ENCODE measurements at regions of chr7 and their contacts with region 1.

Region 1: DNA sequence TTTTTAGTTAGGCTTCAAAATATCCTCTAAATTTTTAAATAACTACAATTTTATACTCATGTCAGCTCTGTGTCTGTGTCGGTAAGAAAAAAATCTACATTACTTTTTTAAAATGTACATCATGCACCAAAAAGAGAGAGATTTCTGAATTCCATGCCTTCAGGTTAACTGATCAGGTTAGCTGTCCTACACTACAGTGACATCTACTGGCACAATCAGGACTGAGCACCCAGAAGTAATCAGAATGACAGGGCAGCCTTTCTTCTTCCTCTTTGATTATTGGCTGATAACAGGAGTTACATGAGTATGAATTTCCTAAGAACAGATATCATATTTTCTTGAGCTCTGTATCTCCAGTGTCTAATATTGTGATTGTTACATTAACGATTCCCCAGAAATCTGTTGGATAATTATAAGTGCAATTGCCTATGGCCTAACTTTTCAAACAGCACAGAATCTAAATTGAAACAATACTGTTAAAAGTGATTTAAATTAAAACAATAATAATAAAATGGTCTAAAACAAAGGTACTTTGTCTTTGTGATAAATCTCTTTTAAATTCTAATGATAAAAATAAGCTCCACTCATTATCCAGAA is 41.8 kb upstream of the HYCC1 start:
- DNase-seq: peak; percentile 47
- H3K4me3 ChIP-seq: no peak overlapping the region
- H3K27ac ChIP-seq: no peak overlapping the region
- H3K4me1 ChIP-seq: no peaks in the 10 kb centered on the region
- H3K27me3 ChIP-seq: peaks cover 15% of the 10 kb centered on the region
- CTCF ChIP-seq: peak; percentile 71 to 88 (median 76)
- EP300 ChIP-seq: no peak
- POLR2A ChIP-seq: no peak

Region 2: GRCh38 chr7:22051886-22052673 is 1003.6 kb before region 1 on chr7:
- in situ Hi-C with region 1: no loop called
- intact Hi-C with region 1: no loop called
- DNase-seq: no peak
- H3K4me3 ChIP-seq: no peak overlapping the region
- H3K27ac ChIP-seq: no peak overlapping the region
- H3K4me1 ChIP-seq: no peaks in the 10 kb centered on the region
- H3K27me3 ChIP-seq: no peaks in the 10 kb centered on the region
- CTCF ChIP-seq: no peak
- EP300 ChIP-seq: no peak
- POLR2A ChIP-seq: no peak

Region 3: GRCh38 chr7:22559829-22560489 is 495.7 kb before region 1 on chr7:
- in situ Hi-C with region 1: loop called (anchors 5 to 25 kb)
- intact Hi-C with region 1: loop called (anchors 5 kb)
- DNase-seq: peak; percentile 65
- H3K4me3 ChIP-seq: no peak overlapping the region
- H3K27ac ChIP-seq: no peak overlapping the region
- H3K4me1 ChIP-seq: peaks cover 6 to 25% (median 7%) of the 10 kb centered on the region in 4 donors
- H3K27me3 ChIP-seq: peaks cover 13% of the 10 kb centered on the region
- CTCF ChIP-seq: peak; percentile 70 to 88 (median 83)
- EP300 ChIP-seq: no peak
- POLR2A ChIP-seq: no peak

Region 4: DNA sequence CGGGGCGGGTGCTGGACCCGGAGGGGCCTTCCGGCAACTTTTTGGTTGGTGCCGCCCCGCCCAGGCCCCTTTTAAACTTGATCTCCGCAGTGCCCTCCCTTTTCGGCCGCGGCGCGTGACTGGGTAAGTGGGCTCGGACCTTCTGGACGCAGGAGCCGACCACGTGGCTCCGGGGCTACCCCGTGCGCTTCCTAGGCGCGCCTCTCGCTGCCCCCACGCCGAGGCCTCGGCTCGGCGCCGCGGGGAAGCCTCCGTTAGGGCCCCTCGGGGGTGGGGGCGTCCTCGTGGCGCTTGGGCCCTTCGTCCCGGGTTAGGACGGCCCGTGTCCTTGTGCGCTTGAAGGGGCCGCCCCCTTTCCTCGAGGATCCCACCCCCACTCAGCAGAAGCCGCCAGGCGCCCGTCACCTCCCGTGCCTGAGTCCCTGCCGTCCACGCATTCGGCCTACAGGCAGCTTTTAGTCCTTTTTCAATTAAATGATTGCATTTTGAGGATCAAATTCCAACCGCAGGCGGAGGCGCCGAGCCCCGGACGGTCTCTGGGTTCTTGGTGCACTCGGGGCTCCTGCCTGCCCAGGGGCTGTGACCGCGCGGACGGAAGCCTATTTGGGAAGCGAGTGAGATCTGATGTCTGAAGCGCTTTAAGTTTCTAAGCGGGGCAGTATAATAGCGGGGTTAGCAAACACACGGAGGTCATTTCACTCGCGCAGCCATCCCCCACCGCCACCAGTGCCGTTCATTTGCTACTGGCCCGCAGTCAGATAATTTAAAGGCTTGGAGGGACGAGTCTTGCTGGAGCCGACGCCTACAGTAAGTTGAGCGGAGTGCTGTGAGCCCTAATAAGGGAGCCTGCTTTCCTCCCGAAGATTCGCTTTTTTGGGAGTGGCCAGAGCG is 201.3 kb before region 1 on chr7:
- in situ Hi-C with region 1: loop called in 1 of 4 experiments (anchors 10 kb)
- intact Hi-C with region 1: no loop called
- DNase-seq: peak; percentile 90
- H3K4me3 ChIP-seq: peak overlapping the region; percentile 59 to 90 (median 83)
- H3K27ac ChIP-seq: peak overlapping the region; percentile 92 to 95 (median 94)
- H3K4me1 ChIP-seq: peaks cover 4 to 23% (median 11%) of the 10 kb centered on the region in 4 donors
- H3K27me3 ChIP-seq: no peaks in the 10 kb centered on the region
- CTCF ChIP-seq: peak in 1 of 5 experiments; percentile 36
- EP300 ChIP-seq: no peak
- POLR2A ChIP-seq: peak; percentile 35

Region 5: GRCh38 chr7:22962775-22963358 is 92.8 kb before region 1 on chr7:
- in situ Hi-C with region 1: no loop called
- intact Hi-C with region 1: no loop called
- DNase-seq: no peak
- H3K4me3 ChIP-seq: no peak overlapping the region
- H3K27ac ChIP-seq: no peak overlapping the region
- H3K4me1 ChIP-seq: no peaks in the 10 kb centered on the region
- H3K27me3 ChIP-seq: no peaks in the 10 kb centered on the region
- CTCF ChIP-seq: no peak
- EP300 ChIP-seq: no peak
- POLR2A ChIP-seq: no peak

Measured in transverse colon (tissue), 4 donors.